ENCODE measurements at regions of chr20 and their contacts with region 1.

Region 1: GRCh38 chr20:37615340-37616109 is 78.3 kb upstream of the CTNNBL1 start:
- DNase-seq: peak; percentile 61 to 71
- ATAC-seq: peak; percentile 91 to 96
- H3K4me3 ChIP-seq: no peak overlapping the region
- H3K27ac ChIP-seq: no peak overlapping the region
- H3K4me1 ChIP-seq: no peaks in the 10 kb centered on the region
- CTCF ChIP-seq: peak; percentile 51
- EP300 ChIP-seq: no peak
- POLR2A ChIP-seq: no peak
- RAD21 ChIP-seq: peak in 1 of 2 experiments; percentile 47; a peak in 3 of 5 replicates

Region 2: GRCh38 chr20:37627060-37627769 is 11.7 kb after region 1 on chr20:
- CTCF ChIA-PET with region 1: interaction called, 11 read pairs
- POLR2A ChIA-PET with region 1: no interaction called
- DNase-seq: peak in 1 of 2 experiments; percentile 48
- ATAC-seq: peak; percentile 64 to 75; a peak in 4 of 6 replicates
- H3K4me3 ChIP-seq: no peak overlapping the region
- H3K27ac ChIP-seq: no peak overlapping the region
- H3K4me1 ChIP-seq: no peaks in the 10 kb centered on the region
- CTCF ChIP-seq: no peak
- EP300 ChIP-seq: no peak
- POLR2A ChIP-seq: no peak
- RAD21 ChIP-seq: no peak

Measured in A549 (cell line).